ENCODE measurements at regions of chr5 and their contacts with region 1.

Region 1: DNA sequence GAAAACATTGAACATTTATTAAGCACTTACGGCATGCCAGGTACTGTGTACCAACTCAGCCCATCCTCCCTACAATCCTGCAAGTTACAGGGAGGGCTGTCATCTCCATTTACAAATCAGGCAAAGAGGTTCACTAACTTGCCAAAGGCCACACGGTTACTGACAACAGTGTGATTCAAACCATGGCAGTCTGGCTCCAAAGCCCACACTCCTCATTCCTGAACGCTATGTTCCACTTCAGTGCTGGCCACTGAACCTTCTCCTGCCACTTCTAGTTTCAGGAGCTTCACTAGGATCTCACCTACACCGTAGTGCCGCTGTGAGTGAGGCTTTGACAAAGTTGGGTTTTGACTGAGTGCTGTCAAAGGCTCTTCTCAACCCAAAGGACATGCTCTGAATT is 7.2 kb upstream of the LIFR start:
- DNase-seq: no peak
- H3K4me3 ChIP-seq: no peak overlapping the region
- CTCF ChIP-seq: no peak
- POLR2A ChIP-seq: no peak

Region 2: GRCh38 chr5:38540314-38540713 is 23.3 kb before region 1 on chr5:
- intact Hi-C with region 1: loop called (anchors 1 kb)
- DNase-seq: no peak
- H3K4me3 ChIP-seq: no peak overlapping the region
- CTCF ChIP-seq: no peak
- POLR2A ChIP-seq: no peak